Activated CD4-positive, alpha-beta memory T cell treated with anti-CD3 and anti-CD28 coated beads, Interleukin-2, amount 10 ng/mL, durations not matched to agents 7 days and 5 days (primary cell): ENCODE measurements at regions of chr4 and their contacts with region 1.

Region 1: DNA sequence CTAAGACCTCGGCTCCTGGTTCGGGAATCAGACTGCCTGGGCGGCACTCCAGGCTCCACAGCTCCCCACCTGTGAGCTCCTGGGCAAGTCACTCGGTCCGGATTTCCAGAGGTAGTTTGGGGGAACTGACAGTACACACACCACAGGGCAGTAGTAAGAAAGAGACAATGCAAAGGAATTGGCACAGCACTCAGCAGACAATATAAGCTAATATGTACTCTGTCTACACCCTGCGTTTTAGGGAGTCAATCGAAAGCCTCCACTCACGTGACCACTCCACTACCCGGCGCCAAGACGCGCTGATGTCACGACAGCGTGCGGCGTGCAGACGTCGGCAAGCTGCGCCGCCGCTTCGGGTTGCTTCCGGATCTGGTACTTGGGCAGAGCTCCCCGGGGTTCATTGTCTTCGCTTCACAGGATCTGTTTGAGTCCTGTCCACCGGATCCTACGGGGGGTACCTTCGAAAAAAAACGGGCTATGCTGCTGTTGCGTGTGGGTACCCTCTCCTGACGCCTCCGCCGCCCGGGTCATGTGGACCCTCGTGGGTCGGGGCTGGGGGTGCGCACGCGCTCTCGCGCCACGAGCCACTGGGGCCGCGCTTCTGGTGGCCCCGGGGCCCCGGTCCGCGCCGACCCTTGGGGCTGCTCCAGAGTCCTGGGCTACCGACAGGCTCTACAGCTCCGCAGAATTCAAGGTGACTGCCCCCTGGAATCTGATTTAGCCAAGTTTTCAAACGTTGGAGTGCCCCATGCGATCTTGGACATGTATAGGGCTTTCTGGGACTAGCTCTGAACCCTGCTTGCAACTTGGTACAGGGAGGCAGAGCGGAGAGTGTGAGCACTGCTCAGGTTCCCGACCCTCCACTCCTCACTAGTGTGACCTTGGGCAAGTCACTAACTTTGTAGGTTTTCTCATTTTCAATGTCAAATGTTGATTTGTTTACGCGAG is at the start of gene GUF1:
- DNase-seq: peak; percentile 92
- H3K4me3 Mint-ChIP-seq: peak within 1 kb of the TSS; percentile 95
- H3K27ac Mint-ChIP-seq: peak within 1 kb of the TSS; percentile 94
- H3K4me1 Mint-ChIP-seq: peaks cover 38% of the 10 kb centered on the region
- H3K27me3 Mint-ChIP-seq: no peaks in the 10 kb centered on the region
- total RNA-seq, gene GUF1: 18.0 to 20.6 TPM

Region 2: DNA sequence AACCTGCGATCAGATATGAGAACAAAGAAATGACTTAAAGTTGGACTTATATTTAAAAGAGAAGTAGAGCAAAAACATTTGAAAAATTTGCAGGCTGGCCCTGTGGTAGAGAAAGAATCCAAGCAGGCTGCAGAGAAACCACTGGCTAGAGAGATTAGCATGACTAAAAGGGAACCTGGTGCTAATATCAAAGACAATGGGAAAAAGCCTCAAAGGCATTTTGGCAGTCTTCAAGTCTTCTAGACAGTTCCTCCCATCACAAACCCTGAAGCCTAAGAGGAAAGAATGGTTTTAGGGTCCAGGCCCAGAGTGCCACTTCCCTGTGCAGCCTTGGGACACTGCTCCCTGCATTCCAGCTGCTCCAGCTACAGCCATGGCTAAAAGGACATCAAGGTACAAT is 263.1 kb before region 1 on chr4:
- CTCF ChIA-PET with region 1: no interaction called
- POLR2A ChIA-PET with region 1: no interaction called
- DNase-seq: no peak
- H3K4me3 Mint-ChIP-seq: no peak overlapping the region
- H3K27ac Mint-ChIP-seq: no peak overlapping the region
- H3K4me1 Mint-ChIP-seq: no peaks in the 10 kb centered on the region
- H3K27me3 Mint-ChIP-seq: no peaks in the 10 kb centered on the region

Region 3: DNA sequence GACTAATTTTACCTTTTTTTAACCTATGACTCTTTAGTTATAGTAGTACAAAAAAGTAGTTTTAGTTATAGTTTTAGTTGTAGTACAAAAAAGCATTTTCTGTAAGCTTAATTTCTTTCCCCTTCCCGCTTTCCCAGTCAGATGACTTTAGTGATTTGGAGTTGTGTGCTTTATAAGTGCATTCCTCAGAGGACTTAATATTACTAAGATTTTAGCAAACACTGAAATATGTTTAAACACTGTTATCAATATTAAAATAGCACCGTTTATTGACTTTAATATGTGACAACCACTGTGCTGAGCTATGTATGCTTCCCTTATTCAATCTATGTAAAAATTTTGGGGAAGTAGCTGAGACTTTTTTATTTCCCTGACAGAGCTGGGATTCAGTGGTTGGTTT is 22.7 kb after region 1 on chr4:
- CTCF ChIA-PET with region 1: interaction called, 6 read pairs
- POLR2A ChIA-PET with region 1: interaction called, 18 read pairs
- DNase-seq: no peak
- H3K4me3 Mint-ChIP-seq: no peak overlapping the region
- H3K27ac Mint-ChIP-seq: no peak overlapping the region
- H3K4me1 Mint-ChIP-seq: peaks cover 2% of the 10 kb centered on the region
- H3K27me3 Mint-ChIP-seq: no peaks in the 10 kb centered on the region

Region 4: DNA sequence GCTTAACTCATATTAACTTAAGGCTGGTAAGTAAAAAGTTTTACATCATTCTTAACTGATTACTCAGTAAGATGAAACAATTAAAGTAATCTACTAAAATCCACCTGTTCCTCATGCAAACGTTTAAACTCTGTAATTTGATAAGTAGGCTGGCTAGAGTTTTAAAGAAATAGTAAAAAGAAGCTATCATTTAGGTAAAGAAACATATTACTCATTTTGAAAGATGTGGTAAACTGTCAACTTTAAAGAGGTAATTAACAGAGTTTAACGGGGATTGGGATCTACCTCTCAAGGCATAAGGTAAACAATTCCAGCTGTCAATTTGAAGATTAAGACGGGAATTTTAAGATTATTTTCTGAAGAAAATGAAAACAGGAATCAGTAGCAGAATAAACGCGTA is 38.2 kb after region 1 on chr4:
- CTCF ChIA-PET with region 1: interaction called, 4 read pairs
- POLR2A ChIA-PET with region 1: interaction called, 11 read pairs
- DNase-seq: no peak
- H3K4me3 Mint-ChIP-seq: no peak overlapping the region
- H3K27ac Mint-ChIP-seq: no peak overlapping the region
- H3K4me1 Mint-ChIP-seq: peaks cover 1% of the 10 kb centered on the region
- H3K27me3 Mint-ChIP-seq: no peaks in the 10 kb centered on the region

Region 5: GRCh38 chr4:44726262-44726871 is 48.0 kb after region 1 on chr4 and contains the start of gene GNPDA2:
- CTCF ChIA-PET with region 1: interaction called, 4 read pairs
- POLR2A ChIA-PET with region 1: interaction called, 71 read pairs
- DNase-seq: peak; percentile 85
- H3K4me3 Mint-ChIP-seq: peak within 1 kb of the TSS; percentile 94
- H3K27ac Mint-ChIP-seq: peak within 1 kb of the TSS; percentile 80
- H3K4me1 Mint-ChIP-seq: peaks cover 30% of the 10 kb centered on the region
- H3K27me3 Mint-ChIP-seq: peaks cover 3% of the 10 kb centered on the region
- total RNA-seq, gene GNPDA2: 11.1 to 12.2 TPM